Dorsolateral prefrontal cortex (tissue), 120 donors: ENCODE measurements at regions of chr6 and their contacts with region 1.

Region 1: DNA sequence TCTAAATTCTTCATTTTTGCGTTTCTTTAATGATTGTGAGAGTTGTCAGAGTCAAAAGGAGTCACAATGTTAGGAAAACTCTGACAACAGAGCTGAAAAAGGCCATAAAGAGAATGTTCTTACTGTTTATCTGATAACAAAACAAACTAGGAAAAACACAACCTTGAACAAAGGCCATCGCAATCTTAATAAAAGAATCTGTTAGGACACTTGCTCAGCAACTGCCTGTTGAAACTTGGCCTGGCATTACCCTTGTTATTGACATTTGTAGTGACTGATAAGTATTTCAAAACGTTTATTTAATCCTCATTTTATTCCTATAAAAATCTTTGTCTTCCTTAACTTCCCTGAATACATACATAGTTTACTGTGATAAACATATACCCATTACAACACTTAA is 15.7 kb downstream of the GSTA1 start:
- DNase-seq: no peak
- H3K4me3 ChIP-seq: no peak overlapping the region
- H3K27ac ChIP-seq: no peak overlapping the region
- H3K27me3 ChIP-seq: no peaks in the 10 kb centered on the region
- CTCF ChIP-seq: no peak

Region 2: GRCh38 chr6:52829046-52829817 is 41.3 kb after region 1 on chr6:
- intact Hi-C with region 1: loop called in 1 of 2 experiments (anchors 2 kb)
- DNase-seq: no peak
- H3K4me3 ChIP-seq: no peak overlapping the region
- H3K27ac ChIP-seq: no peak overlapping the region
- H3K27me3 ChIP-seq: no peaks in the 10 kb centered on the region
- CTCF ChIP-seq: no peak